Endothelial cell of umbilical vein (primary cell): ENCODE measurements at regions of chr6 and their contacts with region 1.

Region 1: GRCh38 chr6:13624871-13625288 is 9.7 kb downstream of the NOL7 start:
- DNase-seq: peak; percentile 40
- H3K4me3 ChIP-seq: no peak overlapping the region
- H3K27ac ChIP-seq: no peak overlapping the region
- H3K4me1 ChIP-seq: no peaks in the 10 kb centered on the region
- H3K27me3 ChIP-seq: no peaks in the 10 kb centered on the region
- CTCF ChIP-seq: peak; percentile 54 to 63
- POLR2A ChIP-seq: peak; percentile 47

Region 2: GRCh38 chr6:13702809-13703302 is 78.0 kb after region 1 on chr6:
- CTCF ChIA-PET with region 1: interaction called, 10 read pairs
- POLR2A ChIA-PET with region 1: no interaction called
- dilution Hi-C with region 1: no loop called
- intact Hi-C with region 1: no loop called
- DNase-seq: no peak
- H3K4me3 ChIP-seq: no peak overlapping the region
- H3K27ac ChIP-seq: no peak overlapping the region
- H3K4me1 ChIP-seq: peaks cover 14% of the 10 kb centered on the region
- H3K27me3 ChIP-seq: no peaks in the 10 kb centered on the region
- CTCF ChIP-seq: no peak
- POLR2A ChIP-seq: no peak